ENCODE measurements at regions of chr7 and their contacts with region 1.

Region 1: DNA sequence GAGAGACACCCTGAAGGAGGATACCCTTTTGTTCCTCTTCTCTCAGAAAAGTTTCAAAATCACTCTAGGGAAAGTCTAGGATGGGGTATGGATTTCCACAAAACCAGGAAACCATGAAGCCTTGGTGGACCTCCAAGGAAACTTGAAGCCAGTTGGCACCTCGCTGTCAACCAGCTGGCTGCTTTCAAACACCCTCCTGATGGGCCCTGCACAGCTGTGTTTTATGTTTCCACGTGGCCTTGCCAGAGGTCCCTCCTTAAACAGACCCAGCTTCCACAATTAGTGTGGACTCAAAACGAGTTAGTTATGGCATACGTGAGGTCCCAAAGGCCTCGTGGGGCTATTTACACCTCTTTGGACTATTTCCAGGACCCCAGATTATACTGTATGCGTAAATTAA is 5.9 kb downstream of the PPP1R3A start:
- DNase-seq: peak in 3 of 5 donors; percentile 25 to 50 (median 30)
- ATAC-seq: peak in 3 of 4 donors; percentile 59 to 80 (median 69)
- H3K4me3 ChIP-seq: peak overlapping the region in 4 of 12 donors; percentile 4 to 62 (median 48)
- H3K27ac ChIP-seq: peak overlapping the region in 2 of 12 donors; percentile 6 to 11
- H3K4me1 ChIP-seq: peaks cover 0 to 4% (median 0%) of the 10 kb centered on the region in 12 donors
- H3K27me3 ChIP-seq: no peaks in the 10 kb centered on the region
- CTCF ChIP-seq: no peak
- POLR2A ChIP-seq: no peak

Region 2: DNA sequence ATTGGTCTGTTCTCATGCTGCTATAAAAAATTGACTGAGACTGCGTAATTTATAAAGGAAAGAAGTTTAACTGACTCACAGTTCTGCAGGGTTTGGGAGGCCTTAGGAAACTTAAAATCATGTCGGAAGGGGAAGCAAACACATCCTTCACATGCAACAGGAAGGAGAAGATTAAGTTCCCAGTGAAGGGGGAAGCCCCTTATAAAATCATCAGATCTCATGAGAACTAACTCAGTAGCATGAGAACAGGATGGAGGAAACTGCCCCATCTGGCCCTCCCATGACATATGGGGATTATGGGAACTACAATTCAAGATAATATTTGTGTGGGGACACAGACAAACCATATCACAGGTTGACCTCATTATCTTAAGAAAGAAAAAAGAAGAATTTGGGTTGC is 128.6 kb before region 1 on chr7:
- intact Hi-C with region 1: loop called in 2 of 10 experiments (anchors 5 to 10 kb)
- DNase-seq: no peak
- ATAC-seq: no peak
- H3K4me3 ChIP-seq: no peak overlapping the region
- H3K27ac ChIP-seq: no peak overlapping the region
- H3K4me1 ChIP-seq: peaks cover 0 to under 1% (median 0%) of the 10 kb centered on the region in 12 donors
- H3K27me3 ChIP-seq: no peaks in the 10 kb centered on the region
- CTCF ChIP-seq: no peak
- POLR2A ChIP-seq: no peak

Region 3: DNA sequence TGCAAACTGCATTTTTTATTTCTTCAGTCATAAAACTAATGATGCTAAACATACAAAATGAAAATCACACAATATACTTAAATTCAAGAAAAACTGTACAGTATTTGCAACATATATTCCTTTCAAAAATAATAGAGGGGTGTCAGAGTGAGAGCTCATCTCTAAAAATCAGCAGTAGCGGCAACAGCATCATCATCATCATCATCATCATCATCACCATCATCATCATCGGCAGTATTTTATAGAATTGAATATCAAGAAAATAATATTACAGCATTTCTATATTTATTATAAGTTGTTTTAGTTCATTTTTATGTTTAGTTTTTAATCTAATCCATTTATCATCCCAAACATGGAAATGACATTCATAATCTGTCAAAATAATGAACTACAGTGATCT is 73.3 kb after region 1 on chr7:
- intact Hi-C with region 1: no loop called
- DNase-seq: no peak
- ATAC-seq: no peak
- H3K4me3 ChIP-seq: no peak overlapping the region
- H3K27ac ChIP-seq: no peak overlapping the region
- H3K4me1 ChIP-seq: no peaks in the 10 kb centered on the region
- H3K27me3 ChIP-seq: no peaks in the 10 kb centered on the region
- CTCF ChIP-seq: no peak
- POLR2A ChIP-seq: no peak

Region 4: GRCh38 chr7:114026486-114027089 is 113.7 kb after region 1 on chr7:
- intact Hi-C with region 1: no loop called
- DNase-seq: no peak
- ATAC-seq: no peak
- H3K4me3 ChIP-seq: no peak overlapping the region
- H3K27ac ChIP-seq: no peak overlapping the region
- H3K4me1 ChIP-seq: no peaks in the 10 kb centered on the region
- H3K27me3 ChIP-seq: no peaks in the 10 kb centered on the region
- CTCF ChIP-seq: peak; percentile 54 to 84 (median 70)
- POLR2A ChIP-seq: no peak

Region 5: DNA sequence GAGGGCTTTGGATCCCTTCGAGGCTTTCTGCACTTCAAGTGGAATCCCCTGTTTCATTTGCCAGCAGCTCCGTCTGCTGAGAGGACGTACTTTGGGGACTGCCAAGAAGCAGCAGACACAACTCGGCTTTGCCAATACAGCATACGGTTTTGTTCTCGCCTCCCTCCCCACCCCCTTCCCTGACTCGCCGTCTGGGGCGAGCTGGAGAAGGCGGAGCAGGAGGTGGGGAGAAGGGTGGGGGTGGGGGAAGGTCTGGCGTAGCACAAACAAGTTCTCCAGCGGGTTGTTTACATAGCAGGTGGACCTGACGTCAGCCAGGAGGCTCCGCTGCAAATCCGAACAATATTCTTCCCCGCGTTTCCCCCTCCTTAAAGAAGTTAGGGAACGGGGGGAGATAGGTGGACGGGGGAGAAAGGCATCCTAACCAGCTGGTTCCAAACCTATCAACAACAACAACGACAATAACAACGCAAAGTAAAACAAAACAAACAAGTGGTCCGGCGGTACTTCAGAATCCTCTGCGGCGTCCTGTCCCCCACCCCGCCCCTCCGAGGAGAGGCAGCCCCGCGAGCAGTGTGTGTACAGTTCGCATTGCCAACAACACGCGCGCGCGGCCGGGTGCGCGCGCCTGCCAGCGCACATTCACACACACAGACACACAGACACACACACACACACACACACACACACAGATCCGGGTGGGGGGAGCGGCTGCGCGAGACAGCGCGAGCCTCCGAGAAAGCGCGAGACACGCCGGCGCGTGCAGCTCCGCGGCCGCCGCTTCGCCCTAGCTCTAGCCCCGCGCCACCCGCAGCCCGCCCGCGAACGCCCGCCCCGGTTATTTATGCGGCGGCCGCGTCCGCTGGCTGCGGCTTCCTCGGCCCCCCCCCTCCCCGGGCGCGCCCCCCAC is 173.0 kb after region 1 on chr7:
- intact Hi-C with region 1: no loop called
- DNase-seq: peak; percentile 70 to 89 (median 79)
- ATAC-seq: peak; percentile 77 to 90 (median 88)
- H3K4me3 ChIP-seq: peak overlapping the region; percentile 22 to 73 (median 61)
- H3K27ac ChIP-seq: peak overlapping the region; percentile 56 to 92 (median 79)
- H3K4me1 ChIP-seq: peaks cover 0 to 53% (median 11%) of the 10 kb centered on the region in 12 donors
- H3K27me3 ChIP-seq: peaks cover 5 to 97% (median 65%) of the 10 kb centered on the region in 9 donors
- CTCF ChIP-seq: no peak
- POLR2A ChIP-seq: no peak

Measured in heart left ventricle (tissue), 16 donors.